PC-9 (cell line): ENCODE measurements at regions of chr9 and their contacts with region 1.

Region 1: DNA sequence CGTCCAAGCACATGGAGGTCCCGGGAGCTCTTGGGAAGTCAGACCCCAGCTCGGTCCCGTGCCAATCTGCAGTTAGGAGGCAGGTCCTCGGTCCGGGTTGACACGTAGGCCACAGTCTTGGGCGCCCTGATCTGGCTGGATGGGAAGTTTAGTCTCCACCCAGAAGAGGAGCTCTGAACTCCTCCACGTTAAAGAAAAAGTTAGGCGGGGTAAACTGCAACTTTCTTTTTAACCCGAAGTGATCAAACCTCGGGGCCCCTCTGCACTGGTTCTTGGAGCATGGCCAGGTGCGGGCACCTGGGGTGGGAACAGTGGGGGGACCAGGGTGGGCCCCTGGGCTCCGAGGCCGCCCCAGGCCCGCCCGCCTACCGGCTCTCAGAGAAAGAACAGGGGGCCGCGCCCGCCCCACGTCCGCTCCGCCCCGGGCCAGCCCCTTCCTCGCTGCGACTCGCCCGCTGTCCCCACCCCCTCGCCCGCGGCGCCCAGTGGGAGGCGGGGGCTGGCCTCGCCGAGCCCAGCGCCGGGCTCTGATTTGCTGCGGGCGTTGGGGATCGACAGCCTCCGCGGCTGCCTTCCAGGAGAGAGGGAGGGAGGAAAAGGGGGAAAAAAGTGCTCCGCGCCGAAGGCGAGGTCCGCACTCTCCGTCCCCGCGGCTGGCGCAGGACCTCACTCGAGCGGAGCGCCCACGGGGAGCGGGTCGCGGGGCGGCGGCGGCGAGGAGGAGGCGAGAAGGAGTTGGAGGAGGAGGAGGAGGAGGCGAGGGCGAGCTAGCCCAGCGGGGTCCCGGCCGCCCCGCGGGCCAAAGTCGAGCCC is at the start of gene COL5A1:
- DNase-seq: peak in 1 of 2 experiments; percentile 96
- H3K4me3 ChIP-seq: peak within 1 kb of the TSS; percentile 41; the same call in 1 of the 2 replicates
- H3K27ac ChIP-seq: no peak within 1 kb of the TSS
- H3K4me1 ChIP-seq: no peaks in the 10 kb centered on the region
- H3K27me3 ChIP-seq: peaks cover 56% of the 10 kb centered on the region
- CTCF ChIP-seq: no peak
- total RNA-seq, gene COL5A1: 15.2 and 32.8 TPM in 2 replicates

Region 2: DNA sequence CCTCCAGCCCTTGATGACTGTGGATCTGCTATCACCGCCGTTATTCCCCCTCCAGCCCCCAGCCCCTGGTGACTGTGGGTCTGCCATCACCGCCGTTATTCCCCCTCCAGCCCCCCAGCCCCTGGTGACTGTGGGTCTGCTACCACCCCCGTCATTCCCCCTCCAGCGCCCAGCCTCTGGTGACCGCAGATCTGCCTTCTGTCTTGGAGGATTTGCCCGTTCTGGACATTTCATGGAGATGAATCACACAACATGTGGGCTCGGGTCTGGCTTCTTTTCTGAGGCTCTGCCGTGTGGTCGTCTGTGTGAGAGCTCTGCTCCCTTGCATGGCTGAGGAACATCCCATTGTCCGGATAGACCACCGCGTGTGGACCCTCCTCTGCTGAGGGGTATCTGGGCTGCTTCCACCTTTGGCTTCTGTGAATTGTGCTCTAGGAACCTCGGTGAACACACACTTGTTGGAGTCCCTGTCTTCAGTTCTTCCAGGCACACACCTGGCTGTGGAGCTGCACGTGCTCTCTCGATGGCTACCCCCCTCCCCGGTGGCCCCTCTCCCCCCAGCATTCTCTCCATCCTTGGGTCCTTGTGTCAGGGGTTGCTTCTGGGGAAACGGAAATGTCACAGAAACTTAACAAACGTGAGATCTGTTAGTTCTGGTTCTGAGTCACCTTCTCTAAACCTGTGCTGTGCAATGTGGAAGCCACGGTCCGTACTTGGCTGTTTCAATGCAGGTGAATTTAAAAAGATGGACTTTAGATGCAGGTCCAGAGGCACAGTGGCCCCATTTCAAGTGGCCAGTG is 105.1 kb before region 1 on chr9:
- CTCF ChIA-PET with region 1: no interaction called
- POLR2A ChIA-PET with region 1: no interaction called
- intact Hi-C with region 1: loop called (anchors 10 kb)
- DNase-seq: peak in 1 of 2 experiments; percentile 29
- H3K4me3 ChIP-seq: no peak overlapping the region
- H3K27ac ChIP-seq: no peak overlapping the region
- H3K4me1 ChIP-seq: no peaks in the 10 kb centered on the region; the same call in 1 of the 2 replicates
- H3K27me3 ChIP-seq: peaks cover 77% of the 10 kb centered on the region
- CTCF ChIP-seq: no peak

Region 3: DNA sequence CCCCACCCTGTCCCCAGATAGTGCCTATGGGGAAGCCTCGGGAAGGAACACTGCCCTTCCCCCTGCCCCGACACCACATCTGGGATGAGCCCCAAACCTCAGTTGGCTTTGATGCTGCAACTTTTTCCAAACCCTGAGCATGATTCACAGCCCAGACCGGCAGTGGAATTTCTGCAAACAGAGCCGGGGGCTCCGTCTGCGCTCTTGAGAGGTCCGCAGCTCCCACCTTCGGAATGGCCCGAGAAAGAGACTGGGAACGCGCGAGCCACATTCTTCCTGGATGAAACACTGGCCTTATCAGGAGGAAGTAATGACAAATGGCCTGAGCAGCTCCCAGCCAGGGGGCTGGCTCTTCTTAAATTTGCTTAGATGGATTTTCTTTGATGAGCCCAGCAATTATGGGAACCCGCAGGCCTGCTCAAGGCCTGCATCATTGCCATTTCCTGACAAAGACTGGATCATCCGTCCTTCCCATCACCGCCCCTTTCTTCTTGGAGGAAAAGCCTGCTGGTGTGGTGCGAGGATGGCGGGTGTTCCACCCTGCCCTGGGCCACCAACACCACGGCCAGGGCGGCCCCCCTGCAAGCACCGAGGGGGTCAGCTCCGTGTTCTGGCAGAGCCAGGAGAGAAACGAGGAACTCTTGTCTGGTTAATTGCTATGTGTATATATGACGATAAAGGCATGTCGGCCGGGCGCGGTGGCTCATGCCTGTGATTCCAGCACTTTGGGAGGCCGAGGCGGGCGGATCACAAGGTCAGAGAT is 38.7 kb before region 1 on chr9:
- CTCF ChIA-PET with region 1: no interaction called
- POLR2A ChIA-PET with region 1: no interaction called
- intact Hi-C with region 1: loop called (anchors 2 kb)
- DNase-seq: peak; percentile 83 to 95
- H3K4me3 ChIP-seq: 0 out of 2 replicates have a peak overlapping the region, but pooled peaks have one; percentile 14
- H3K27ac ChIP-seq: peak overlapping the region; percentile 68
- H3K4me1 ChIP-seq: peaks cover 17% of the 10 kb centered on the region
- H3K27me3 ChIP-seq: no peaks in the 10 kb centered on the region; the same call in 1 of the 2 replicates
- CTCF ChIP-seq: no peak

Region 4: GRCh38 chr9:134670042-134670525 is 28.7 kb after region 1 on chr9:
- CTCF ChIA-PET with region 1: no interaction called
- POLR2A ChIA-PET with region 1: no interaction called
- intact Hi-C with region 1: loop called (anchors 2 kb)
- DNase-seq: peak; percentile 67 to 73
- H3K4me3 ChIP-seq: no peak overlapping the region
- H3K27ac ChIP-seq: no peak overlapping the region
- H3K4me1 ChIP-seq: peaks cover 9% of the 10 kb centered on the region; the same call in 1 of the 2 replicates
- H3K27me3 ChIP-seq: peaks cover 17% of the 10 kb centered on the region; the same call in 1 of the 2 replicates
- CTCF ChIP-seq: no peak

Region 5: DNA sequence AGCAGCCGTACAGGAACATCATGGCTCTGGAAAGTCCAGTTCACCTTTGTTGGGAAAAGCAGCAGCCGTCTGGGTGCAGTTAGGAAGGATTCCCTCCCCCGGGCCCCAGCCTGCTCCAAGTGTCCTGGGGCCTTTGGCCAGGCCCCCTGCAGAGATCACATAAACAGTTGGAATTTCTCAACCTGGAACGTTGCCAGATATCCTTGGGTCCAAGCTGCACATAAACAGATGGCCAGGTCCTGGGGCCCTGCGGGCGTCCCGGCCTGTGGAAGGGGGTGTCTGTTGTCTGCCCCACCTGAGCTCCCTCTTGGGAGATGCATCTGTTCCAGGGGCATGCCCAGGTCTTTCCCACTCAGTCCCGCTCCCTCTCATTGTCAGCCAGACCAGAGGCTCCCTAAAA is 92.9 kb after region 1 on chr9:
- CTCF ChIA-PET with region 1: no interaction called
- POLR2A ChIA-PET with region 1: no interaction called
- intact Hi-C with region 1: no loop called
- DNase-seq: no peak
- H3K4me3 ChIP-seq: no peak overlapping the region
- H3K27ac ChIP-seq: no peak overlapping the region
- H3K4me1 ChIP-seq: no peaks in the 10 kb centered on the region
- H3K27me3 ChIP-seq: peaks cover 65% of the 10 kb centered on the region
- CTCF ChIP-seq: no peak

Region 6: DNA sequence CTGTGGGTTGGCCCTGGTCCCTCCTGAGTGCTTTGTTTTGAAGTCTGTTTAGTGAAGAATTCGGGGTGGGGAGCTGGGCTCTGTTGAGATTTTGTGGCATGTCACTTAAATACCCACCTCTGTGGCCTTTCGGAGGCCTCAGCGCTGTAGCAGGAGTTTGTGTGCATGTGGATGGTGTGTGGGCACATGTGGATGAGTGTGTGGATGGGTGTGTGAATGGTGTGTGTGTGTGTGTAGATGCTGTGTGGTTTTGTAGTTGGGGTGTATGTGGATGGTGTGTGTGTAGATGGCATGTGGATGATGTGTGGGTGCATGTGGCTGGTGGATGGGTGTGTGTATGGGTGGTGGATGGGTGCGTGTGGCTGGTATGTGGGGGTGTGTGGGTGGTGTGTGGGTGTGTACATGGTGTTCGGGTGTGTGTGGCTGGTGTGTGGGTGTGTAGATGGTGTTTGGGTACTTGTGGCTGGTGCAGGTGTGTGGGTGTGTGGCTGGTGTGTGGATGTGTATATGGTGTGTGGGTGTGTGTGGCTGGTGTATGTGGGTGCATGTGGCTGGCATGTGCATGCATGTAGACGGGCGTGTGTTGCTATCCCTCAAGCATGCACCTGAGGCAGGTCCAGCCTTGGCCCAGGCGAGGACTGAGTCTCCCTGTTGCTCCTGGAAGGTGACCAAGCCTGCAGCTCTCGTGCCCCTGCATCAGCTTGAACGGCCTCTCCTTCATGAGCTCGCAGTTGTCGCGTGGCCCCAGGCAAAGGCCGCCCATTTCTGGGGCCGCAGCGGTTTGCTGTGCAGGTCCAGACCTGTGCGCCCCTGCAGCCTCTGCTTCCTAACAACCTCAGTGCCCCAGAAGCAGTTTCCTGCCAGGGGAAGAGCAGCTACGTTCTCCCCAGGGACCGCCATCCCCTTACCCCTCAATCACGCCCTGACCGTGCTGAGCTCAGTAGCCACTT is 185.2 kb after region 1 on chr9:
- CTCF ChIA-PET with region 1: no interaction called
- POLR2A ChIA-PET with region 1: no interaction called
- intact Hi-C with region 1: no loop called
- DNase-seq: no peak
- H3K4me3 ChIP-seq: no peak overlapping the region
- H3K27ac ChIP-seq: no peak overlapping the region
- H3K4me1 ChIP-seq: no peaks in the 10 kb centered on the region
- H3K27me3 ChIP-seq: peaks cover 32% of the 10 kb centered on the region
- CTCF ChIP-seq: no peak

Region 7: GRCh38 chr9:135410831-135411473 is 769.6 kb after region 1 on chr9:
- CTCF ChIA-PET with region 1: interaction called, 15 read pairs
- POLR2A ChIA-PET with region 1: no interaction called
- intact Hi-C with region 1: no loop called
- DNase-seq: no peak
- H3K4me3 ChIP-seq: no peak overlapping the region
- H3K27ac ChIP-seq: no peak overlapping the region
- H3K4me1 ChIP-seq: peaks cover 8% of the 10 kb centered on the region
- H3K27me3 ChIP-seq: peaks cover 49% of the 10 kb centered on the region
- CTCF ChIP-seq: no peak

Region 8: DNA sequence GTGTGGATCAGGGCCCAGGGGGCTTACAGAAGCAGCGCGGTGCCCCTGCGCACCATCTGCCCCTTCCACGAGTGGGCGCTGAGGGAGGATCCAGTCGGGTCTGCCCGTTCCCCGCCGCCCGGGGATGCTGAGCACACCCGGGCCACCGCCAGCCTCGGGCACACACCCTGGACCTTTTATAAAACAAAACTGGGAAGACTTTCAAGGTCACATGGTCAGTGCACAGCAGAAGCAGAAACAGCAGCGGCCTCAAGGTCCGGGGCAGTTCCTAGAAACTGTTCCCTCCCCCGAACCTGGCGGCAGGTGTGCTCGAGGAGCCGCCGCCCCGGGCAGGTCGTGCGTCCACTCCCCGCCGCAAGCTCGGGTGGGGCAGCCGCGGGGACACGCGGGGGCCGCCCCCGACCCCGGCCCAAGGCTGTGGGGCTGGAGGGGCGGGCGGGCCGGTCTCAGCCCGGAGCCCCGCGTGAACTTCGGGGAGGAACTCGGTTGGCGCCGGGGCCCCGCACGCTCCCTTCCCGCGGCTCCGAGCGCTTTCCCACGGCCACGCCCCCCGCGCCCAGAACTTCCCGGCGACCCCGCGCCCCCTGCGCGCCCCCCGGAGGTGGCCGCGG is 837.6 kb after region 1 on chr9:
- CTCF ChIA-PET with region 1: no interaction called
- POLR2A ChIA-PET with region 1: interaction called, 19 read pairs
- intact Hi-C with region 1: no loop called
- DNase-seq: peak; percentile 58 to 69
- H3K4me3 ChIP-seq: peak overlapping the region; percentile 62
- H3K27ac ChIP-seq: peak overlapping the region; percentile 45
- H3K4me1 ChIP-seq: peaks cover 31% of the 10 kb centered on the region
- H3K27me3 ChIP-seq: no peaks in the 10 kb centered on the region
- CTCF ChIP-seq: no peak